ENCODE measurements at regions of chr12 and their contacts with region 1.

Region 1: GRCh38 chr12:124369055-124369900 is 74.4 kb downstream of the RFLNA start:
- DNase-seq: peak; percentile 64 to 85 (median 79)
- H3K4me3 ChIP-seq: peak overlapping the region in 23 of 59 donors; percentile 2 to 41 (median 17)
- H3K27ac ChIP-seq: peak overlapping the region; percentile 67 to 97 (median 93)
- H3K27me3 ChIP-seq: no peaks in the 10 kb centered on the region
- CTCF ChIP-seq: peak in 42 of 56 donors; percentile 9 to 58 (median 36)

Region 2: GRCh38 chr12:124388679-124389536 is 19.6 kb after region 1 on chr12:
- intact Hi-C with region 1: loop called in 1 of 2 experiments (anchors 2 kb)
- DNase-seq: peak; percentile 74 to 94 (median 88)
- H3K4me3 ChIP-seq: peak overlapping the region; percentile 41 to 83 (median 62)
- H3K27ac ChIP-seq: peak overlapping the region; percentile 70 to 98 (median 92)
- H3K27me3 ChIP-seq: no peaks in the 10 kb centered on the region
- CTCF ChIP-seq: peak in 14 of 56 donors; percentile 4 to 40 (median 21)

Region 3: GRCh38 chr12:124512667-124513296 is 143.5 kb after region 1 on chr12:
- intact Hi-C with region 1: loop called in 1 of 2 experiments (anchors 5 kb)
- DNase-seq: peak in 8 of 10 donors; percentile 72 to 86 (median 81)
- H3K4me3 ChIP-seq: peak overlapping the region in 19 of 59 donors; percentile 2 to 37 (median 17)
- H3K27ac ChIP-seq: peak overlapping the region; percentile 46 to 100 (median 89)
- H3K27me3 ChIP-seq: no peaks in the 10 kb centered on the region
- CTCF ChIP-seq: peak in 1 of 56 donors; percentile 14

Measured in dorsolateral prefrontal cortex (tissue), 120 donors.